PC-9 (cell line): ENCODE measurements at regions of chr16 and their contacts with region 1.

Region 1: GRCh38 chr16:28326944-28327610 is 34.8 kb downstream of the SBK1 start:
- DNase-seq: peak; percentile 56 to 68
- H3K4me3 ChIP-seq: no peak overlapping the region
- H3K27ac ChIP-seq: no peak overlapping the region
- H3K4me1 ChIP-seq: no peaks in the 10 kb centered on the region; the same call in 1 of the 2 replicates
- H3K27me3 ChIP-seq: no peaks in the 10 kb centered on the region
- CTCF ChIP-seq: peak; percentile 79

Region 2: DNA sequence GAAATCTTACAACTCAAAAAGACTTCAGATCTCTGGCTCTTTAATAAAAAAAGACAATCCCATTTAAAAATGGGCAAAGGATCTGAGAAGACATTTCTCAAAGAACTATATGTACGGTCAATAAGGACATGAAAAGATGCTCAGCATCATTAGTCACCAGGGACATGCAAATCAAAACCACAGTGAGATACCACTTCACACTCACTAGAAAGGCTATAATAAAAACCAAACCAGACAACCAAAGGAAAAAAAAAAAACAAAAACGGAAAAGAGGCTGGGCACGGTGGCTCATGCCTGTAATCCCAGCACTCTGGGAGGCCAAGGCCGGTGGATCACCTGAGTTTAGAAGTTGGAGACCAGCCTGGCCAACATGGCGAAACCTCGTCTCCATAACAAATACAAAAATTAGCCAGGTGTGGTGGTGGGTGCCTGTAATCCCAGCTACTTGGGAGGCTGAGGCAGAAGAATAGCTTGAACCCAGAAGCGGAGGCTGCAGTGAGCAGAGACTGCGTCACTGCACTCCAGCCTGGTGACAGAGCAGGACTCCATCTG is 146.7 kb after region 1 on chr16:
- CTCF ChIA-PET with region 1: interaction called, 10 read pairs
- POLR2A ChIA-PET with region 1: no interaction called
- intact Hi-C with region 1: no loop called
- DNase-seq: no peak
- H3K4me3 ChIP-seq: no peak overlapping the region
- H3K27ac ChIP-seq: no peak overlapping the region
- H3K4me1 ChIP-seq: no peaks in the 10 kb centered on the region
- H3K27me3 ChIP-seq: no peaks in the 10 kb centered on the region
- CTCF ChIP-seq: no peak